Naive thymus-derived CD4-positive, alpha-beta T cell (primary cell): ENCODE measurements at regions of chr12 and their contacts with region 1.

Region 1: DNA sequence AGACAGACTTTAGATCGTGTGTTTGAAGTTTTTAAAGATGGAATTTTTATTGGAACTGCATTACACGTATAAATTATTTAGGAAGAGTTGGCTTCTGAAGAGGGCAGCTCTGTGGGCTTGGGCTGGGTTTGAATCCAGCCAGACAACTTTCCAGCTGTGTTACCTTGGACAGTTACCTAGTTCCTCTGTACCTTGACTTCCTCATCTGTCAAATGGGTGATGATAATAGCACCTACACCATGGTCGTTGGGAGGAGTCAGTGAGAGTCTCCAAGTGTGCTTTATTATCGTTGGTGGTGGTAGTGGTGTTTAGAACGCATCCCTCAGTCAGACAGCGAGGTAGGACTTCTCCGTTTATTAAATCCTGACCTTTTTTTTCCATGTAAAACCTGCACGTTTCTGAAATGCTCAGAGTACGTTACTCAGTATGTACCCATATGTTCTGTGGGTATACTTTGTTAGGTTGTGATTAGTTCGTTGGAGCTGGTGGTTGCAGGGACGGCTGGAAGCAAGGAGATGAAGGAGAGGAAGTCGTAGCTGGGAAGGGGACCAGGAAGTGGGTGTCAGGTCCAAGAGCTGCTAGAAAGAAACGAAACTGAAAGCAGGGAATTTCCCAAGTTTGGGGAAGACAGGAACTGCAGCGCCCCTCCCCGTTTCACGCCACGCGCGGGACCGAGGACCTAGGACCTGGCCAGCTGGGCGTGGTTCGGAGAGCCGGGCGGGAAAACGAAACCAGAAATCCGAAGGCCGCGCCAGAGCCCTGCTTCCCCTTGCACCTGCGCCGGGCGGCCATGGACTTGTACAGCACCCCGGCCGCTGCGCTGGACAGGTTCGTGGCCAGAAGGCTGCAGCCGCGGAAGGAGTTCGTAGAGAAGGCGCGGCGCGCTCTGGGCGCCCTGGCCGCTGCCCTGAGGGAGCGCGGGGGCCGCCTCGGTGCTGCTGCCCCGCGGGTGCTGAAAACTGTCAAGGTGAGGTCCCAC is at the start of gene OAS3:
- DNase-seq: peak; percentile 31 to 79 (median 50)
- ATAC-seq: peak; percentile 84
- H3K4me3 ChIP-seq: peak within 1 kb of the TSS; percentile 78
- H3K4me3 Mint-ChIP-seq: peak within 1 kb of the TSS; percentile 85 to 100 (median 93)
- H3K27ac ChIP-seq: peak within 1 kb of the TSS; percentile 82
- H3K27ac Mint-ChIP-seq: peak within 1 kb of the TSS; percentile 90 to 97 (median 95)
- H3K4me1 ChIP-seq: peaks cover 18 to 19% of the 10 kb centered on the region in 2 donors
- H3K4me1 Mint-ChIP-seq: peaks cover 22 to 61% (median 31%) of the 10 kb centered on the region in 7 donors
- H3K27me3 ChIP-seq: no peaks in the 10 kb centered on the region
- H3K27me3 Mint-ChIP-seq: no peaks in the 10 kb centered on the region
- total RNA-seq, gene OAS3: 17.8 to 264 (median 21.6) TPM

Region 2: GRCh38 chr12:112798006-112798760 is 139.8 kb before region 1 on chr12:
- CTCF ChIA-PET with region 1: no interaction called
- POLR2A ChIA-PET with region 1: no interaction called
- intact Hi-C with region 1: no loop called
- DNase-seq: no peak
- ATAC-seq: peak; percentile 20
- H3K4me3 ChIP-seq: no peak overlapping the region
- H3K4me3 Mint-ChIP-seq: no peak overlapping the region
- H3K27ac ChIP-seq: no peak overlapping the region
- H3K27ac Mint-ChIP-seq: no peak overlapping the region
- H3K4me1 ChIP-seq: no peaks in the 10 kb centered on the region
- H3K4me1 Mint-ChIP-seq: peaks cover 0 to 14% (median 10%) of the 10 kb centered on the region in 7 donors
- H3K27me3 ChIP-seq: no peaks in the 10 kb centered on the region
- H3K27me3 Mint-ChIP-seq: peaks cover 34 to 78% (median 54%) of the 10 kb centered on the region in 5 donors

Region 3: DNA sequence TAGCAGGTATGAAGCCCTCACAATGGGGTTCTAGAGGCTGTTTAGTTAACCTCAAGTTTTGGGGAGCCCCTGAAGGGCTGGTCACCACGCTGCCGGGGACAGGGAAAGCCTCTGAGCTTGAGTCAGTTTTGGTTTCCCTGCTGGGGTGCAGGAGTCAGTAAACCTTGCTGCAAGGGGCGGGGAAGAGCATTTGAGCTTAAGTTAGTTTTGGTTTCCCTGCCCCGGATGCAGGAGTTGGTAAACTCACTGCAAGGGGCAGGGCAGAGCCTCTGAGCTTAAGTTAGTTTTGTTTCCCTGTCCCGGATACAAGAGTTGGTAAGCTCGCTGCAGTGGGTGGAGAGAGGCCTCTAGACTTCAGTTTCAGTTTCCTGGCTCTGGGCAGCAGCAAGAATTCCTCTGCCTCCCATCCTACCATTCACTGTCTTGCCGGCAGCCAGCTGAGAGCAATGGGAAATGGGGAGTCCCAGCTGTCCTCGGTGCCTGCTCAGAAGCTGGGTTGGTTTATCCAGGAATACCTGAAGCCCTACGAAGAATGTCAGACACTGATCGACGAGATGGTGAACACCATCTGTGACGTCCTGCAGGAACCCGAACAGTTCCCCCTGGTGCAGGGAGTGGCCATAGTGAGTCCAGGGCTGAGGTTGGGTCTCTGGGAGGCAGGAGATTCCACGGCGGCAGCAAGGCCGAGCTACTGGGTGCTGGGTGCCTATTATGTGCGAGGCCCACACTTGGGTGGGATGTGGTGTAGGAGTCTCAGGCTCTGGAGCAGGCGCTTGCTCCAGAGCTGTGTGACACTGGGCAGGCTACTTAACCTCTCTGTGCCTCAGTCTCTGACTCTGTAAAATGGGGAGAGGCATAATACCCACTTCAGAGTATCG is 40.4 kb after region 1 on chr12 and contains the start of gene OAS2:
- CTCF ChIA-PET with region 1: interaction called, 4 read pairs
- POLR2A ChIA-PET with region 1: interaction called, 27 read pairs
- intact Hi-C with region 1: loop called (anchors 1 kb)
- DNase-seq: peak; percentile 35 to 89 (median 85)
- ATAC-seq: peak; percentile 97
- H3K4me3 ChIP-seq: peak within 1 kb of the TSS; percentile 99
- H3K4me3 Mint-ChIP-seq: peak within 1 kb of the TSS; percentile 87 to 100 (median 96)
- H3K27ac ChIP-seq: peak within 1 kb of the TSS; percentile 89
- H3K27ac Mint-ChIP-seq: peak within 1 kb of the TSS; percentile 97 to 100 (median 99)
- H3K4me1 ChIP-seq: peaks cover 34 to 37% of the 10 kb centered on the region in 2 donors
- H3K4me1 Mint-ChIP-seq: peaks cover 30 to 59% (median 42%) of the 10 kb centered on the region in 7 donors
- H3K27me3 ChIP-seq: no peaks in the 10 kb centered on the region
- H3K27me3 Mint-ChIP-seq: no peaks in the 10 kb centered on the region
- total RNA-seq, gene OAS2: 29.9 to 238 (median 66.0) TPM

Region 4: DNA sequence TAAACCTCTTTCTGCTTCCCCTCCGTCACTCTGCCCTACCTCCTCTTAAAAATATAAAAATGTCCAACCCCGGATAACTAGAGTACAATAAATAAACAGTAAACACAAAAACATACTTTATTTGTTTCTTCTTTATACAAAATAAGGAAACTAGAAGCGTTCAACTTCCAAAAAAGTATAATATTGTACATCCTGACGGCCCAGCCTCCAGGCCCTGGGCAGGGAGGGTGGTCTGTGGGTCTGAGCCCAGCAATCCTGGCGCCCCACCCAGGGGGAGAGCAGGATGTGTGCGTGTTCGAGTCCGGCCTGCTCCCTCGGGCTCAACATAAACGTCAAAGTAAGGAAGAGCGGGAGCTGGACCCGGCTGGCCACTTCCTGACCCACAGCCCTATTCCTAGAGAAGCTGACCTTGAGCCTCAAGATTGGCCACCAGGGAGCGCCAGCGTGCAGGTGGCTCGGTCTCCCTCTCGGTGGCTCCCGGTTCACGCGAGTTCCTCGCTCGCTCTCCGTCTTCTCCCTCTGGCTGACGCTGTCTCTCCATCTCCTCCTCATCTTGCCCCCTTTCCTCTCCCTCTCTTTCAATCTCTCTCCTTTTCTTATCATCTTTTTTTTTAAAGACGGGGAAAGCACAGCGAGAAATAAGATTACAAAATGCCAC is 524.2 kb after region 1 on chr12:
- CTCF ChIA-PET with region 1: no interaction called
- POLR2A ChIA-PET with region 1: no interaction called
- intact Hi-C with region 1: no loop called
- DNase-seq: peak; percentile 22 to 65 (median 55)
- ATAC-seq: peak; percentile 77
- H3K4me3 ChIP-seq: no peak overlapping the region
- H3K4me3 Mint-ChIP-seq: peak overlapping the region; percentile 76 to 93 (median 90)
- H3K27ac ChIP-seq: no peak overlapping the region
- H3K27ac Mint-ChIP-seq: peak overlapping the region in 1 of 9 donors; percentile 82
- H3K4me1 ChIP-seq: peaks cover 6 to 17% of the 10 kb centered on the region in 2 donors
- H3K4me1 Mint-ChIP-seq: peaks cover 14 to 40% (median 29%) of the 10 kb centered on the region in 7 donors
- H3K27me3 ChIP-seq: peaks cover 0 to 5% of the 10 kb centered on the region in 2 donors
- H3K27me3 Mint-ChIP-seq: peaks cover 54 to 81% (median 75%) of the 10 kb centered on the region in 5 donors